T-cell (primary cell): ENCODE measurements at regions of chr18 and their contacts with region 1.

Region 1: GRCh38 chr18:58087917-58088692 is 44.1 kb downstream of the NEDD4L start:
- DNase-seq: no peak
- ATAC-seq: no peak
- H3K4me3 ChIP-seq: no peak overlapping the region
- H3K4me3 Mint-ChIP-seq: no peak overlapping the region
- H3K27ac ChIP-seq: no peak overlapping the region
- H3K27ac Mint-ChIP-seq: no peak overlapping the region
- H3K4me1 ChIP-seq: no peaks in the 10 kb centered on the region
- H3K4me1 Mint-ChIP-seq: no peaks in the 10 kb centered on the region
- H3K27me3 ChIP-seq: no peaks in the 10 kb centered on the region
- H3K27me3 Mint-ChIP-seq: peaks cover 0 to 17% of the 10 kb centered on the region in 2 donors

Region 2: GRCh38 chr18:58076052-58076451 is 12.1 kb before region 1 on chr18:
- CTCF ChIA-PET with region 1: interaction called, 4 to 5 read pairs
- POLR2A ChIA-PET with region 1: interaction called in 1 of 2 experiments, 13 read pairs
- DNase-seq: no peak
- ATAC-seq: no peak
- H3K4me3 ChIP-seq: no peak overlapping the region
- H3K4me3 Mint-ChIP-seq: no peak overlapping the region
- H3K27ac ChIP-seq: no peak overlapping the region
- H3K27ac Mint-ChIP-seq: no peak overlapping the region
- H3K4me1 ChIP-seq: no peaks in the 10 kb centered on the region
- H3K4me1 Mint-ChIP-seq: no peaks in the 10 kb centered on the region
- H3K27me3 ChIP-seq: no peaks in the 10 kb centered on the region
- H3K27me3 Mint-ChIP-seq: peaks cover 3 to 17% of the 10 kb centered on the region in 2 donors